Activated CD4-positive, alpha-beta memory T cell treated with anti-CD3 and anti-CD28 coated beads, Interleukin-2, amount 10 ng/mL, durations not matched to agents 7 days and 5 days (primary cell): ENCODE measurements at regions of chr13 and their contacts with region 1.

Region 1: GRCh38 chr13:98535501-98536354 is 41.2 kb downstream of the STK24 start:
- DNase-seq: no peak
- H3K4me3 Mint-ChIP-seq: no peak overlapping the region
- H3K27ac Mint-ChIP-seq: no peak overlapping the region
- H3K4me1 Mint-ChIP-seq: peaks cover 87% of the 10 kb centered on the region
- H3K27me3 Mint-ChIP-seq: no peaks in the 10 kb centered on the region

Region 2: GRCh38 chr13:98549006-98549727 is 13.4 kb after region 1 on chr13:
- CTCF ChIA-PET with region 1: no interaction called
- POLR2A ChIA-PET with region 1: interaction called, 16 read pairs
- DNase-seq: no peak
- H3K4me3 Mint-ChIP-seq: no peak overlapping the region
- H3K27ac Mint-ChIP-seq: peak overlapping the region; percentile 40
- H3K4me1 Mint-ChIP-seq: peaks cover 81% of the 10 kb centered on the region
- H3K27me3 Mint-ChIP-seq: no peaks in the 10 kb centered on the region

Region 3: DNA sequence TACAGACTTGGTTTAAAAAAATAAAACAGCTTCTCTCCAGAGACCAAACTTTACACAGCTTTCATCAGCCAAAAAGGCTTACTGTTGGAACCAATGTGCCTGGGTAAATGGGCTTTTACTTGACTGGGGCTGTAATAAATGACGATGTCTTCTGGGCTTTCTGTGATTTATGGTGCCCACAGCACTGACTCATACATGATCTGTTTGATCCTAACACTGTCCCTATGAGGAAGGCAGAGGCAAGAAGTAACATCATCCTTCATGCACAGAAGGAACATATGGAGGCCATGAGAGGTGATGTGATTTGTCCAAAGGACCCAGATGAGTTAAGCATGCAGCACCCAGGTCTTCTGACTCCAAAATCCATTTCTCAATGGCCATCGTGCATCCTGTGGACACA is 364.7 kb after region 1 on chr13:
- CTCF ChIA-PET with region 1: no interaction called
- POLR2A ChIA-PET with region 1: no interaction called
- DNase-seq: no peak
- H3K4me3 Mint-ChIP-seq: no peak overlapping the region
- H3K27ac Mint-ChIP-seq: no peak overlapping the region
- H3K4me1 Mint-ChIP-seq: peaks cover 28% of the 10 kb centered on the region
- H3K27me3 Mint-ChIP-seq: no peaks in the 10 kb centered on the region